ENCODE measurements at regions of chr9 and their contacts with region 1.

Region 1: DNA sequence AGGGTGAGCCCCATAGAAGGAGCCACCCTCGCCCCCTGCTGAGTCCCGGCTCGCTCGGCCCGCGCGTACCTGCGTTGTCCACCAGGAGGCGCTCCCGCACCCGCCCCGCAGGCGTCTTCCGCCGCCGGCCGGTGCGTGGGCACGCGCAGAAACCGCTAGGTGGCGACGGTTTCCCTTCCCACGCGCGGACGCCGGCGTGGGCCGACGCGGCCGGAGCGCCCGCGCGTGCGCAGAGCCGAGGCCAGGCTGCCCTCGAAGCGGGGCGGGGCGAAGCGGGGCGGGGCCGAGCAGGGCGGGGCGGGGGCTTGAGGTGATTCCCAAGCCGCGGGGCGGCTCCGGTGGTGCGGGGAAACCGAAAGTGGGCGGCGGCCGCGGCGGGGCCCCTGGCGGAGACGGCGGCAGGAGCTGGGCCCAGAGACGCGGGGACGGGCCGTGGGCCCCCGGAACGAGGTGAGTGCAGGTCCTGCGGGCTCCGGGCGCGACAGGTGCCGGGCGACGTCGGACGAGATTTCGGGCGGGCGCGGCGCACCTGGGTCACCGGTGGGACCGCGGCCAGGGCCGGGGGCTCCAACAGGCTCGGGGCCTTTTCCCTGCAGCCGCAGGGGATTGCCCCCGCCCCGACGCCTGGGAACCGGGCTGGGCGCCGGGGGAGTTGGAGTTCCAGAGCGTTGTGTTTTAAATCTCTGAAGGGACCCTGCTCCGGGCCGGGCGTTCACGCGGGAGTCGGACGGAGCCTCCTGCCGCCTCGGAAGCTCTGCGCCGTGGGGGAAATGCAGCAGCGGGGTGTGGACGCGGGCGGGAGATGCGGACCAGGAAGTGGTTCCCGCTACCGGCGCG is at the start of gene TDRD7:
- DNase-seq: peak; percentile 86
- ATAC-seq: peak; percentile 89
- H3K4me3 Mint-ChIP-seq: peak within 1 kb of the TSS; percentile 84
- H3K27ac Mint-ChIP-seq: peak within 1 kb of the TSS; percentile 81
- H3K4me1 Mint-ChIP-seq: peaks cover 21% of the 10 kb centered on the region
- H3K27me3 Mint-ChIP-seq: peaks cover 19% of the 10 kb centered on the region
- CTCF ChIP-seq: peak; percentile 99
- total RNA-seq, gene TDRD7: 3.7 to 4.0 TPM

Region 2: DNA sequence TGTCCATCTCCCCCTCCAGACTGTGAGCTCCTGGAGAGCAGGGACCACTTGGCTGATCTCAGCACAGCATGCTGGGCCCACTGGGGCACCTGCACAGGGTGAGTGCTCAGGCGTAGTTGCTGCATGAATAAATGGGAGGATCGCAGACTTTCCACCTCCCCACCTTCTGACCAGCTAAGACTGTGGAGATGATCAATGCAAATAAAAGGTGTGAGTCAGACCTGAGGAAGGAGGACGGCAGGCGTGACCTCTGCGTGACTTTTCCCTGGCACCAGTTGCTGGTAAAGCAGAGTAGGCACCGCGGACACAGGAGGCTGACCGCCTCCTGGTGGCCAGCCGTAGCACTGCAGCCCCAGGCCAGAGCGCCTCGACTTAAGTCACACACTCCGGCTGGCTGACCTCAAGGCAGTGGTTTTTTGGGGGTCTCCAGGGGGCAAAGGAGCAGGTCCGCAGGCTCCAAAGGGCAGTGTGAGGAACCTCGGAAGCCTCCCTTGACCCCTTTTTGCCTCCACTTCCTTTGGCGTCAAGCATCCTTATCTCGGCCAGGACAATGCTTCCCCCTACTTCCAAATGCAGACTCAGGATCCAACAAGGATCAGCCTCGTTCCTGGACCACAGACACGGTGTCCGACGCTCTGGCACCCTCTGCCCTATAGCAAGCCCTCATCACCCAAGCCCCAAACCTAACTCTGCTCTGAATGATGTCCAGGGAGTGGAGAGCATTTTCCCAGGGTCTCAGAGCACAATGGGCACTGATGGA is 12.8 kb before region 1 on chr9:
- CTCF ChIA-PET with region 1: interaction called, 17 read pairs
- POLR2A ChIA-PET with region 1: interaction called, 3 read pairs
- intact Hi-C with region 1: no loop called
- DNase-seq: peak; percentile 80
- ATAC-seq: peak; percentile 80
- H3K4me3 Mint-ChIP-seq: no peak overlapping the region
- H3K27ac Mint-ChIP-seq: no peak overlapping the region
- H3K4me1 Mint-ChIP-seq: peaks cover 16% of the 10 kb centered on the region
- H3K27me3 Mint-ChIP-seq: peaks cover 4% of the 10 kb centered on the region
- CTCF ChIP-seq: peak; percentile 98

Region 3: GRCh38 chr9:97501177-97501971 is 89.4 kb after region 1 on chr9 and contains the start of gene TMOD1:
- CTCF ChIA-PET with region 1: interaction called, 5 read pairs
- POLR2A ChIA-PET with region 1: no interaction called
- intact Hi-C with region 1: loop called (anchors 5 kb)
- DNase-seq: peak; percentile 50
- ATAC-seq: peak; percentile 86
- H3K4me3 Mint-ChIP-seq: peak within 1 kb of the TSS; percentile 62
- H3K27ac Mint-ChIP-seq: no peak within 1 kb of the TSS
- H3K4me1 Mint-ChIP-seq: peaks cover 12% of the 10 kb centered on the region
- H3K27me3 Mint-ChIP-seq: peaks cover 47% of the 10 kb centered on the region
- CTCF ChIP-seq: no peak
- total RNA-seq, gene TMOD1: 0.47 to 0.60 TPM